Mammary epithelial cell (primary cell): ENCODE measurements at regions of chr7 and their contacts with region 1.

Region 1: GRCh38 chr7:51141451-51142003 is 175.1 kb downstream of the COBL start:
- DNase-seq: peak; percentile 48
- H3K4me3 ChIP-seq: no peak overlapping the region
- H3K27ac ChIP-seq: no peak overlapping the region
- H3K4me1 ChIP-seq: peaks cover 36% of the 10 kb centered on the region
- H3K27me3 ChIP-seq: no peaks in the 10 kb centered on the region
- CTCF ChIP-seq: peak; percentile 63 to 75

Region 2: GRCh38 chr7:50206453-50207250 is 934.9 kb before region 1 on chr7:
- CTCF ChIA-PET with region 1: no interaction called
- dilution Hi-C with region 1: no loop called
- in situ Hi-C with region 1: no loop called
- intact Hi-C with region 1: loop called (anchors 5 kb)
- DNase-seq: no peak
- H3K4me3 ChIP-seq: no peak overlapping the region
- H3K27ac ChIP-seq: no peak overlapping the region
- H3K4me1 ChIP-seq: no peaks in the 10 kb centered on the region
- H3K27me3 ChIP-seq: peaks cover 2% of the 10 kb centered on the region
- CTCF ChIP-seq: no peak

Region 3: GRCh38 chr7:50696810-50697582 is 444.5 kb before region 1 on chr7:
- CTCF ChIA-PET with region 1: interaction called, 3 read pairs
- dilution Hi-C with region 1: no loop called
- in situ Hi-C with region 1: loop called (anchors 25 kb)
- intact Hi-C with region 1: loop called (anchors 1 kb)
- DNase-seq: no peak
- H3K4me3 ChIP-seq: no peak overlapping the region
- H3K27ac ChIP-seq: no peak overlapping the region
- H3K4me1 ChIP-seq: no peaks in the 10 kb centered on the region
- H3K27me3 ChIP-seq: no peaks in the 10 kb centered on the region
- CTCF ChIP-seq: peak; percentile 57 to 58

Region 4: GRCh38 chr7:50793115-50793946 is 348.2 kb before region 1 on chr7:
- CTCF ChIA-PET with region 1: no interaction called
- dilution Hi-C with region 1: no loop called
- in situ Hi-C with region 1: no loop called
- intact Hi-C with region 1: loop called (anchors 2 kb)
- DNase-seq: no peak
- H3K4me3 ChIP-seq: peak overlapping the region in 2 of 3 experiments; percentile 37 to 53
- H3K27ac ChIP-seq: no peak overlapping the region
- H3K4me1 ChIP-seq: no peaks in the 10 kb centered on the region
- H3K27me3 ChIP-seq: peaks cover 13% of the 10 kb centered on the region
- CTCF ChIP-seq: no peak

Region 5: DNA sequence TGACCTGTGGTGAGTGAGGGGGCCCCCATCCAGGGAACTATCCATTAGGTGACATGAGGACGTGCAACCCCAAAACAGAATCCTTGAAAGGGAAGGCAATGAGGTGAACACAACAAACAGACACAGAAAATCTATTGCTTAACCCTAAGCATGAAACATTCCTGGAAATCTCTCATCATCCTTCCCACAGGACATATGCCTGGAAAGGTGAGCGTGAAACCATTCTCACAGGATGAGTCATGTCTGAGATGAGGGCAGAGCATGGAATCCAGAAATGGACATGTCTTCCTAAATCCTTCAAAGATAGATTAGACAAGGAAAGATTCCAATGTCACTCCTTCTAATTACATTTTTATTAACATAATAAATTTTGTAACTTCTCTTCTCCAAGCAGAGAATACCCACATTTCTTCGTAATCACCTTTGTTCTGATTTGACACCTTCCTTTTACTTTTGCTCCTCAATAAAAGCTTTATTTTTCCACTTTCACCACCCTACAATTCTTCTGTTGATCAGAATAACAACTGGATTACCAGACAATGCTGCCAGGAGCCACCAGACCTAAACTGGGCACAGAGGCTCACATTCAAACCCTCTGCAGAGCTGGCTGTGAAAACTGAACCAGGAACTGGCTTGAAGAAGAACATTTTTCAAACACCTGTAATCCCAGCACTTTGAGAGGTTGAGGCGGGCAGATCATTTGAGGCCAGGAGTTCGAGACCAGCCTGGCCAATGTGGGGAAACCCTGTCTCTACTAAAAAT is 107.8 kb after region 1 on chr7:
- CTCF ChIA-PET with region 1: interaction called, 22 read pairs
- dilution Hi-C with region 1: no loop called
- in situ Hi-C with region 1: no loop called
- intact Hi-C with region 1: no loop called
- DNase-seq: peak; percentile 28
- H3K4me3 ChIP-seq: no peak overlapping the region
- H3K27ac ChIP-seq: no peak overlapping the region
- H3K4me1 ChIP-seq: peaks cover 3% of the 10 kb centered on the region
- H3K27me3 ChIP-seq: no peaks in the 10 kb centered on the region
- CTCF ChIP-seq: no peak